Endothelial cell of umbilical vein (primary cell): ENCODE measurements at regions of chr6 and their contacts with region 1.

Region 1: GRCh38 chr6:9503111-9503761 is 911.6 kb downstream of the TFAP2A start:
- DNase-seq: peak; percentile 93
- H3K4me3 ChIP-seq: no peak overlapping the region
- H3K27ac ChIP-seq: peak overlapping the region; percentile 98
- H3K4me1 ChIP-seq: peaks cover 17% of the 10 kb centered on the region
- H3K27me3 ChIP-seq: no peaks in the 10 kb centered on the region
- CTCF ChIP-seq: no peak
- POLR2A ChIP-seq: no peak

Region 2: DNA sequence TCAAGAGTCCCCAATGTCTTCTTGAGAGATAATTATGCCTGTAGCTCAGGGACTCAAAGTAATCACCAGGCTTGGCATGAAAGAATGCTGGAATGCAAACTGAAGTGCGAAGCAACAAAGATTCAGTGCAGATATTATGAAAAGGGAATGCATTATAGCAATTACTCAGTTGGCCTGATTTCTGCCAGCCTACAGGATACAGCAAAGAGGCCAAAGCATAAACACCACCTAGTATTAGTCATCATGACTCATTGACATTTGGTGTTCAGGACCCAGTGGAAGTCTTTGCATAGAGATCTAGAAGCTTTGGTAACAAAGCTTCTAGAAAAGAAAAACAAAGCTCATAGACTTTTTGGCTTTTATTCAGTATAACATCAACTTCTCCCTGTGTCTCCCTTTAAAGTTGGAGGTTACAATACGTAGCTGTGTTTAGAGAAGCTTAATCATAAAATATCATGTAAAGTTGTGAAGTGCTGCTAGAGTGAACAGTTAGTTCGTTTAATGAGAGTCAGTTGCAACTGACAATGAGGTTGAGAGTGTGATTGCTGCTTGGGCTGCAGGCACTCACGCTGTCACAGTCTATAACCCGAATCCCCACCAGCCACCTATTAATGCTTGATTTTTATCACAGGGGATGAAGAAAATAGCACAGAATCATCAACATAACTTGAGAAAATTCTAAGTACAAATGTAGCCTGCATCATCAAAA is 21.1 kb before region 1 on chr6:
- CTCF ChIA-PET with region 1: interaction called, 8 read pairs
- POLR2A ChIA-PET with region 1: interaction called, 3 read pairs
- dilution Hi-C with region 1: no loop called
- intact Hi-C with region 1: loop called (anchors 1 kb)
- DNase-seq: peak; percentile 86
- H3K4me3 ChIP-seq: no peak overlapping the region
- H3K27ac ChIP-seq: peak overlapping the region; percentile 65
- H3K4me1 ChIP-seq: peaks cover 19% of the 10 kb centered on the region
- H3K27me3 ChIP-seq: no peaks in the 10 kb centered on the region
- CTCF ChIP-seq: no peak
- POLR2A ChIP-seq: no peak

Region 3: GRCh38 chr6:9520417-9521151 is 17.3 kb after region 1 on chr6:
- CTCF ChIA-PET with region 1: no interaction called
- POLR2A ChIA-PET with region 1: no interaction called
- dilution Hi-C with region 1: no loop called
- intact Hi-C with region 1: loop called (anchors 1 kb)
- DNase-seq: peak; percentile 88
- H3K4me3 ChIP-seq: peak overlapping the region in 1 of 3 experiments; percentile 30
- H3K27ac ChIP-seq: peak overlapping the region; percentile 92
- H3K4me1 ChIP-seq: peaks cover 33% of the 10 kb centered on the region
- H3K27me3 ChIP-seq: no peaks in the 10 kb centered on the region
- CTCF ChIP-seq: no peak
- POLR2A ChIP-seq: no peak

Region 4: GRCh38 chr6:9583753-9584352 is 80.6 kb after region 1 on chr6:
- CTCF ChIA-PET with region 1: no interaction called
- POLR2A ChIA-PET with region 1: no interaction called
- dilution Hi-C with region 1: no loop called
- intact Hi-C with region 1: loop called (anchors 5 kb)
- DNase-seq: peak; percentile 4
- H3K4me3 ChIP-seq: no peak overlapping the region
- H3K27ac ChIP-seq: no peak overlapping the region
- H3K4me1 ChIP-seq: no peaks in the 10 kb centered on the region
- H3K27me3 ChIP-seq: no peaks in the 10 kb centered on the region
- CTCF ChIP-seq: no peak
- POLR2A ChIP-seq: no peak

Region 5: GRCh38 chr6:9646342-9647067 is 143.3 kb after region 1 on chr6:
- CTCF ChIA-PET with region 1: no interaction called
- POLR2A ChIA-PET with region 1: no interaction called
- dilution Hi-C with region 1: no loop called
- intact Hi-C with region 1: loop called (anchors 1 kb)
- DNase-seq: peak; percentile 78
- H3K4me3 ChIP-seq: no peak overlapping the region
- H3K27ac ChIP-seq: peak overlapping the region; percentile 58
- H3K4me1 ChIP-seq: peaks cover 40% of the 10 kb centered on the region
- H3K27me3 ChIP-seq: no peaks in the 10 kb centered on the region
- CTCF ChIP-seq: no peak
- POLR2A ChIP-seq: no peak